BJ (cell line): ENCODE measurements at regions of chr12 and their contacts with region 1.

Region 1: GRCh38 chr12:120228291-120229070 is 27.6 kb upstream of the RPLP0 start:
- DNase-seq: no peak
- H3K4me3 ChIP-seq: no peak overlapping the region
- H3K27me3 ChIP-seq: no peaks in the 10 kb centered on the region
- CTCF ChIP-seq: peak; percentile 91

Region 2: GRCh38 chr12:120216742-120217605 is 11.5 kb before region 1 on chr12:
- CTCF ChIA-PET with region 1: interaction called, 20 read pairs
- POLR2A ChIA-PET with region 1: no interaction called
- DNase-seq: no peak
- H3K4me3 ChIP-seq: no peak overlapping the region
- H3K27me3 ChIP-seq: no peaks in the 10 kb centered on the region
- CTCF ChIP-seq: no peak

Region 3: GRCh38 chr12:120249875-120250795 is 21.7 kb after region 1 on chr12:
- CTCF ChIA-PET with region 1: interaction called, 75 read pairs
- POLR2A ChIA-PET with region 1: no interaction called
- DNase-seq: no peak
- H3K4me3 ChIP-seq: no peak overlapping the region
- H3K27me3 ChIP-seq: no peaks in the 10 kb centered on the region
- CTCF ChIP-seq: no peak

Region 4: GRCh38 chr12:120265473-120266179 is 37.1 kb after region 1 on chr12 and contains the start of gene PXN:
- CTCF ChIA-PET with region 1: interaction called, 482 read pairs
- POLR2A ChIA-PET with region 1: interaction called, 18 read pairs
- DNase-seq: no peak
- H3K4me3 ChIP-seq: peak within 1 kb of the TSS; percentile 95
- H3K27me3 ChIP-seq: no peaks in the 10 kb centered on the region
- CTCF ChIP-seq: peak; percentile 59
- polyA plus RNA-seq, gene PXN: 23.9 and 41.8 TPM in 2 replicates